Activated CD8-positive, alpha-beta T cell treated with anti-CD3 and anti-CD28 coated beads, Interleukin-2, amount 10 ng/mL, durations not matched to agents 7 days and 5 days (primary cell): ENCODE measurements at regions of chr18 and their contacts with region 1.

Region 1: DNA sequence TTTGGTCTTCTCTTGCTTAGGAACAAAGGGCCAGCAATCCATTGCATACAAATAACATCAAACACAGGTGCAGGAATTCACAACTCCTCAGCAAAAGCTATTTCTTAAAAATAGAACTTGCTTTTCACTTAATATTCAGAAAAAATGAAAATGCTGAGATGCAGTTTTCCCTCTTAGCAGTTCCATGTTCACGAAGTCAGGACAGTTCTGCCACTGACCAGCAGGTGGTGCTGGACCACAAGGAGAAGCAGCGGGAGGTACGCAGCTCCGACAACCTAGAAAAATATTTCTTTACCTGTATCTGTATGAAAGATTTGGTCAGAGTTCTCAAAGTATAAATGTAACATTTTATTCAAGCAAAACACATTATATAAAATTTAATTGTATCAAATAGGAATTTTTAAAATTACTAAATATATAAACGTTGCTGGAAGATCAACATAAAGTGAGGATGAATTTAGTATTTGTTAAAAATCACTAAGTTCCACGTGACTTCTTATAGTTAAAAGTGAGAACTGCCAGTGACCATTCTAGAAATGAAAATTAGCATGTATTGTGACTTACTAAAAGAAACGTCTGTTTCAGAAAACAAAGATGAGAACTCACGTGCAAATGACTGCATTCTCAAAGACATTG is 48.8 kb downstream of the ADNP2 start:
- DNase-seq: peak; percentile 80
- ATAC-seq: no peak
- H3K4me3 Mint-ChIP-seq: no peak overlapping the region
- H3K27ac Mint-ChIP-seq: no peak overlapping the region
- H3K4me1 Mint-ChIP-seq: peaks cover 3% of the 10 kb centered on the region
- H3K27me3 Mint-ChIP-seq: peaks cover 4% of the 10 kb centered on the region

Region 2: GRCh38 chr18:80088823-80089222 is 69.0 kb before region 1 on chr18:
- CTCF ChIA-PET with region 1: no interaction called
- POLR2A ChIA-PET with region 1: no interaction called
- DNase-seq: no peak
- ATAC-seq: no peak
- H3K4me3 Mint-ChIP-seq: no peak overlapping the region
- H3K27ac Mint-ChIP-seq: no peak overlapping the region
- H3K4me1 Mint-ChIP-seq: no peaks in the 10 kb centered on the region
- H3K27me3 Mint-ChIP-seq: peaks cover 4% of the 10 kb centered on the region

Region 3: DNA sequence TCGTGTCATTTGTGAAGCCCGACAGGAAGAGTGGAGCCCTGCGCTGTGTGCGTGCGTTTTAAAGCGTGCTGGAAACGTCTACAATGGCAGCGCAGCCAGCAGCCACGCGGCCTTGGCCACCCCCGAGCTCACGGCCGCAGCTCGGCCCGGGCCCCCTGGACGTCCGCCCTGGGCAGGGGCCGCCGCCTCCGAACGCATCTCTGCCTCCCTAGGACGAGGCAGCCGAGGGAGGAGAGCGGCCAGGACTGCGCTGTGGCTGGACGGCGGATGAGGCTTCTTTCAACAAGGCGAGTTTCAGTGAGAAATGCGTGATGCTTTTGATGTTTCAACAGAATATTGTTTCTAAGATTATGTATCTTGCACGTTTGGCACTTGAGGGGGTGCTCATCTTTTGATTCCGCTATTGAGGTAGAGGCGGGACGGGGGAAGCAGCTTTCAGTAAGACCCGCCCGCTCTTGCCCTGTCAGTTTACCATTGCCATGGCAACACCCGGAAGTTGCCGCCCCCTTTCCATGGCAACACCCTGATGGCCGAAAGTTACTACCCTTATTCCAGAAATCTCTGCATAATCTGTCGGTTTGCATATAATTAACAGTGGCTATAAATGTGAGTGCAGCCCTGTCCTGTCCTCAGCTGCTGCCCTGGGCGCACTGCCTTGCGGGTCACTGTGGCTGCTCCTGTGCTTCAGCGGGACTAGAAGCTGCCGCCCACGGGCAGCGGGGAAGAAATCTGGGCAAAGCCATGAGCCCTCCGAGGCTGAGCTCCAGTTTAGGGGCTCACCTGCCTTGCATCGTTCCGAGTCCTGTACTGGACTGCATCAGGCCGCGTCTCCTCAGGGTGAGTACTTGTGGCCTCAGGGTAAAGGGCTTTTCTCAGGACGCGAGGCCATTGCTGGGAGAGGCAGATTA is 10.2 kb before region 1 on chr18:
- CTCF ChIA-PET with region 1: interaction called, 87 read pairs
- POLR2A ChIA-PET with region 1: no interaction called
- DNase-seq: peak; percentile 89
- ATAC-seq: peak; percentile 82
- H3K4me3 Mint-ChIP-seq: peak overlapping the region; percentile 74
- H3K27ac Mint-ChIP-seq: peak overlapping the region; percentile 59
- H3K4me1 Mint-ChIP-seq: peaks cover 19% of the 10 kb centered on the region
- H3K27me3 Mint-ChIP-seq: peaks cover 4% of the 10 kb centered on the region

Region 4: GRCh38 chr18:80171054-80171872 is 13.4 kb after region 1 on chr18:
- CTCF ChIA-PET with region 1: interaction called, 16 read pairs
- POLR2A ChIA-PET with region 1: no interaction called
- DNase-seq: peak; percentile 66
- ATAC-seq: no peak
- H3K4me3 Mint-ChIP-seq: no peak overlapping the region
- H3K27ac Mint-ChIP-seq: no peak overlapping the region
- H3K4me1 Mint-ChIP-seq: peaks cover 20% of the 10 kb centered on the region
- H3K27me3 Mint-ChIP-seq: peaks cover 26% of the 10 kb centered on the region

Region 5: DNA sequence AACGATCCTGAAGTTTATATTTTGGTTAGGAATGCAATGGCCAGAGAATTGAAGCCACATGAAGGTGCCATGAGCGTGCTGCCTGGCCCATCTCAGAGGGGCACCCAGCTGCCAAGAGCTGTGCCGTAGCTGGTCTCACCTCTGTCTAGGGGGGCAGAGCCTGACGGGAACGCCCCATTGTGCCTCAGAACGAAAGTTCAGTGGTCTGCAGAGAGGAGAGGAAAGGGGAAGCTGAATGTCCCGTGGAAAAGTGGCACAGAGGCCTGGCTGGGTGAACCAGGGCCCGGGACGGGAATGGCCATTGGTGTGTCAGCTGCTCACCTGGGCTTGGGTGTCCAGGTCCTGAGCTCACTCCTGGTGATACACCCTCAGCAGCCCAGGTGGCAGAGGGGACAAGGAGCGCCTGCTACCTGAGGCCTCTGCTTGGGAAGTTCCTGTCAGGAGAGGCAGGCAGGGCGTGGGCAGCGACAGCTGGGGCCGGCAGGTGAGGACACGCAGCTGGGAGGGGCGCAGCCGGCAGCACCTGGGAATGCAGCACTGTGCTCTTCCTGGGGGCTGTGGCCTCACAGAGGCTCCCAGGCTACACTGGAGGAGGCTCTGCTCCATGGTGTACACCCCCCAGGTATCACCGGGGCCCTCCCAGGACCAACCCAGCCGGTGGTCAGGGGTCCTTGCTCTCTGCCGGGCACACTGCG is 22.2 kb after region 1 on chr18:
- CTCF ChIA-PET with region 1: interaction called, 13 read pairs
- POLR2A ChIA-PET with region 1: no interaction called
- DNase-seq: no peak
- ATAC-seq: no peak
- H3K4me3 Mint-ChIP-seq: no peak overlapping the region
- H3K27ac Mint-ChIP-seq: no peak overlapping the region
- H3K4me1 Mint-ChIP-seq: peaks cover 15% of the 10 kb centered on the region
- H3K27me3 Mint-ChIP-seq: peaks cover 13% of the 10 kb centered on the region

Region 6: GRCh38 chr18:80247403-80247916 is 89.6 kb after region 1 on chr18 and contains the start of gene PARD6G:
- CTCF ChIA-PET with region 1: interaction called, 15 read pairs
- POLR2A ChIA-PET with region 1: no interaction called
- DNase-seq: peak; percentile 74
- ATAC-seq: peak; percentile 86
- H3K4me3 Mint-ChIP-seq: peak within 1 kb of the TSS; percentile 45
- H3K27ac Mint-ChIP-seq: no peak within 1 kb of the TSS
- H3K4me1 Mint-ChIP-seq: peaks cover 5% of the 10 kb centered on the region
- H3K27me3 Mint-ChIP-seq: peaks cover 39% of the 10 kb centered on the region
- total RNA-seq, gene PARD6G: 0.18 TPM in 1 of 2 experiments, not detected in the other

Region 7: GRCh38 chr18:80254971-80255500 is 97.2 kb after region 1 on chr18:
- CTCF ChIA-PET with region 1: interaction called, 31 read pairs
- POLR2A ChIA-PET with region 1: no interaction called
- DNase-seq: peak; percentile 14
- ATAC-seq: no peak
- H3K4me3 Mint-ChIP-seq: no peak overlapping the region
- H3K27ac Mint-ChIP-seq: no peak overlapping the region
- H3K4me1 Mint-ChIP-seq: no peaks in the 10 kb centered on the region
- H3K27me3 Mint-ChIP-seq: peaks cover 5% of the 10 kb centered on the region